ENCODE measurements at regions of chr6 and their contacts with region 1.

Region 1: DNA sequence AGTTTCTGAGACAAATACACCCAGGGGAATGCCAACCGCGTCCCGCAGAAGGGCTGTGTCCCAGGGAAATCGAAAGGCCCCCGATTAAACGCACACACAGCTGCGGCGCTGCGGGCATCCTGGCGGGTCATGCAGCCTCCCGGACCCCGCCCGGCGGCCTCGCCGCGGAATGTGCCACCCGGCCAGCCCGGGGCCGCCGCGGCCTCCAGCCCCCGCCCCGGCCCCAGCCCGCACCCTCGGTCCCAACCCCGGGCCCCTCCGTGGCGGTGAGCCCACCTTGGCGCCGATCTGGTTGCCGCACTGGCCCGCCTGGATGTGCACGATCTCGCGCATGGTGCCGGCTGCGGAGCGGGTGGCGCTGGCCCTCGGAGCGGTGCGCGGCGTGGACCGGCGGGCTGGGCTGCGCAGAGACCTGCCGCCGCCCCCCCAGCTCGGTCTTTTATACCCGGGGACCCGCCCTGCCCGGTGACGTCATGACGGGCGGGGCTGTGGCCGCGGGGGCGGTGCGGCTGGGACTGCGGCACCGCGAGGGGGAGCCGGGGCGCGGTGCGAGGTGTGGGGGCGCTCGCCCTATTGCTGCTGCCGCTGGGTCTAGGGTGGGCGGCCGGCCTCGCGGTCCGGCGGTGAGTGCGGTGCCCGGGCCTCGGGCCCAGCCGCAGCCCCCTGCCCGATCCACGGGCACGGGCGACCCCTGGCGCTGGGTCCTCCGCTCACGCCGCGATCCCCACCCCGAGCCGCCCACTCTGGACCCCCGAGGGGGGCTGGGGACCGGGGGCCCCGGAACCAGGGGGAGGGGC is at the start of gene TUBB2A:
- DNase-seq: peak; percentile 93 to 99 (median 96)
- ATAC-seq: peak; percentile 74
- H3K4me3 ChIP-seq: peak within 1 kb of the TSS; percentile 74
- H3K27ac ChIP-seq: peak within 1 kb of the TSS; percentile 90
- H3K4me1 ChIP-seq: peaks cover 36 to 40% of the 10 kb centered on the region in 2 experiments
- H3K27me3 ChIP-seq: no peaks in the 10 kb centered on the region
- CTCF ChIP-seq: peak; percentile 56 to 95 (median 87)
- EP300 ChIP-seq: no peak; the same call in 1 of the 2 replicates
- POLR2A ChIP-seq: peak; percentile 95
- RAD21 ChIP-seq: peak; percentile 71 to 74
- polyA plus RNA-seq, gene TUBB2A: 3.6 to 6.3 TPM

Region 2: GRCh38 chr6:2810092-2810671 is 347.1 kb before region 1 on chr6:
- CTCF ChIA-PET with region 1: no interaction called
- POLR2A ChIA-PET with region 1: no interaction called
- in situ Hi-C with region 1: no loop called
- intact Hi-C with region 1: no loop called
- DNase-seq: no peak
- ATAC-seq: peak; percentile 40
- H3K4me3 ChIP-seq: no peak overlapping the region
- H3K27ac ChIP-seq: no peak overlapping the region
- H3K4me1 ChIP-seq: peaks cover 3 to 5% of the 10 kb centered on the region in 2 experiments; a peak in 2 of 5 replicates
- H3K27me3 ChIP-seq: no peaks in the 10 kb centered on the region
- CTCF ChIP-seq: no peak
- EP300 ChIP-seq: no peak
- POLR2A ChIP-seq: no peak
- RAD21 ChIP-seq: no peak

Region 3: DNA sequence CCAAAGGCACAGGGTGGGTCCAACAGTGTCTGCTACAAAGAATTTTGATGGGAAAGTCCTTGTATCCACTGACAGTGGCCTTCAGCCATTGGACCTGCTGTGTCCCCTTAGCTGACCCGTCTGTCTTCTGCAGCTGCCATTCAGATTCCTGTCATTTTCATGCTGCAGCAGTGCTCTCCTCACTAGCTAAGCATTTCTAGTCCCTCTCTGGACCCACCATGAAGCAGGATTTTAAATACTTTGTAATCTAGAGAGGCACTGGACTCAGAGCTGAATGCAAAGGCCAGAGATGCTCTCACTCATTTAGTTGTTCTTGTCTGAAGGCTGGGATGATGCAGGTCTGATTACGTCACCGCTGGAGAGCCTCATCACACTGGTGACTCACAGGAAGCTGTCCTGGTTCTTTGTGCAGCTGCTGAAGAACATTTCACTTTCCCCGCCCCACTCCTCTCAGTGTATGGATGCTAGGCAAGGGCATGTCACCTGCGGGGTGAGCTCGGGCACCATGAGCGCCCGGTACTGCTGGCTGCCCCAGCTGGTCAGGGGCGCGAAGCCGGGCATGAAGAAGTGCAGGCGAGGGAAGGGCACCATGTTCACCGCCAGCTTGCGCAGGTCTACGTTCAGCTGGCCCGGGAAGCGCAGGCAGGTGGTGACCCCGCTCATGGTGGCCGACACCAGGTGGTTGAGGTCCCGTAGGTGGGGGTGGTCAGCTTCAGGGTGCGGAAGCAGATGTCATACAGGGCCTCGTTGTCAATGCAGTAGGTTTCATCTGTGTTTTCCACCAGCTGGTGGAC is 19.4 kb after region 1 on chr6:
- CTCF ChIA-PET with region 1: no interaction called
- POLR2A ChIA-PET with region 1: interaction called, 15 read pairs
- in situ Hi-C with region 1: no loop called
- intact Hi-C with region 1: loop called (anchors 1 kb)
- DNase-seq: peak; percentile 76 to 91 (median 83)
- ATAC-seq: peak; percentile 94
- H3K4me3 ChIP-seq: no peak overlapping the region
- H3K27ac ChIP-seq: peak overlapping the region; percentile 31; the same call in 1 of the 3 replicates
- H3K4me1 ChIP-seq: peaks cover 34 to 46% of the 10 kb centered on the region in 2 experiments
- H3K27me3 ChIP-seq: peaks cover 0 to 4% of the 10 kb centered on the region in 2 experiments; a peak in 1 of 5 replicates
- CTCF ChIP-seq: 0 out of 6 replicates have a peak, but pooled peaks of 1 of the 3 experiments have one; percentile 3
- EP300 ChIP-seq: peak; percentile 66; the same call in 1 of the 2 replicates
- POLR2A ChIP-seq: no peak
- RAD21 ChIP-seq: no peak

Region 4: GRCh38 chr6:3229566-3230178 is 72.3 kb after region 1 on chr6:
- CTCF ChIA-PET with region 1: no interaction called
- POLR2A ChIA-PET with region 1: interaction called, 10 read pairs
- in situ Hi-C with region 1: no loop called
- intact Hi-C with region 1: no loop called
- DNase-seq: peak; percentile 61 to 70 (median 67)
- ATAC-seq: peak; percentile 74
- H3K4me3 ChIP-seq: no peak overlapping the region
- H3K27ac ChIP-seq: no peak overlapping the region
- H3K4me1 ChIP-seq: peaks cover 38 to 50% of the 10 kb centered on the region in 2 experiments
- H3K27me3 ChIP-seq: peaks cover 44 to 61% of the 10 kb centered on the region in 2 experiments
- CTCF ChIP-seq: peak; percentile 29 to 47 (median 34); a peak in 2 of 6 replicates
- EP300 ChIP-seq: no peak
- POLR2A ChIP-seq: no peak
- RAD21 ChIP-seq: peak in 1 of 2 experiments; percentile 33; a peak in 2 of 4 replicates

Measured in K562 (cell line).